Common myeloid progenitor, CD34-positive (primary cell): ENCODE measurements at regions of chr15 and their contacts with region 1.

Region 1: GRCh38 chr15:74620636-74621545 is 5.3 kb downstream of the CLK3 start:
- DNase-seq: peak; percentile 80 to 88 (median 86)
- H3K4me3 ChIP-seq: no peak overlapping the region
- H3K27ac ChIP-seq: no peak overlapping the region
- H3K4me1 ChIP-seq: peaks cover 8 to 24% (median 20%) of the 10 kb centered on the region in 4 experiments
- H3K27me3 ChIP-seq: no peaks in the 10 kb centered on the region

Region 2: GRCh38 chr15:74291101-74292071 is 329.5 kb before region 1 on chr15:
- CTCF ChIA-PET with region 1: no interaction called
- POLR2A ChIA-PET with region 1: no interaction called
- DNase-seq: peak; percentile 76 to 90 (median 89)
- H3K4me3 ChIP-seq: peak overlapping the region in 1 of 7 experiments; percentile 1
- H3K27ac ChIP-seq: no peak overlapping the region
- H3K4me1 ChIP-seq: peaks cover 0 to 10% (median 8%) of the 10 kb centered on the region in 4 experiments
- H3K27me3 ChIP-seq: peaks cover 0 to 28% (median 1%) of the 10 kb centered on the region in 5 experiments

Region 3: GRCh38 chr15:74470631-74471395 is 150.1 kb before region 1 on chr15:
- CTCF ChIA-PET with region 1: no interaction called
- POLR2A ChIA-PET with region 1: no interaction called
- DNase-seq: no peak
- H3K4me3 ChIP-seq: no peak overlapping the region
- H3K27ac ChIP-seq: no peak overlapping the region
- H3K4me1 ChIP-seq: no peaks in the 10 kb centered on the region
- H3K27me3 ChIP-seq: no peaks in the 10 kb centered on the region

Region 4: GRCh38 chr15:74680456-74680855 is 59.6 kb after region 1 on chr15:
- CTCF ChIA-PET with region 1: no interaction called
- POLR2A ChIA-PET with region 1: no interaction called
- DNase-seq: no peak
- H3K4me3 ChIP-seq: no peak overlapping the region
- H3K27ac ChIP-seq: no peak overlapping the region
- H3K4me1 ChIP-seq: no peaks in the 10 kb centered on the region
- H3K27me3 ChIP-seq: no peaks in the 10 kb centered on the region

Region 5: DNA sequence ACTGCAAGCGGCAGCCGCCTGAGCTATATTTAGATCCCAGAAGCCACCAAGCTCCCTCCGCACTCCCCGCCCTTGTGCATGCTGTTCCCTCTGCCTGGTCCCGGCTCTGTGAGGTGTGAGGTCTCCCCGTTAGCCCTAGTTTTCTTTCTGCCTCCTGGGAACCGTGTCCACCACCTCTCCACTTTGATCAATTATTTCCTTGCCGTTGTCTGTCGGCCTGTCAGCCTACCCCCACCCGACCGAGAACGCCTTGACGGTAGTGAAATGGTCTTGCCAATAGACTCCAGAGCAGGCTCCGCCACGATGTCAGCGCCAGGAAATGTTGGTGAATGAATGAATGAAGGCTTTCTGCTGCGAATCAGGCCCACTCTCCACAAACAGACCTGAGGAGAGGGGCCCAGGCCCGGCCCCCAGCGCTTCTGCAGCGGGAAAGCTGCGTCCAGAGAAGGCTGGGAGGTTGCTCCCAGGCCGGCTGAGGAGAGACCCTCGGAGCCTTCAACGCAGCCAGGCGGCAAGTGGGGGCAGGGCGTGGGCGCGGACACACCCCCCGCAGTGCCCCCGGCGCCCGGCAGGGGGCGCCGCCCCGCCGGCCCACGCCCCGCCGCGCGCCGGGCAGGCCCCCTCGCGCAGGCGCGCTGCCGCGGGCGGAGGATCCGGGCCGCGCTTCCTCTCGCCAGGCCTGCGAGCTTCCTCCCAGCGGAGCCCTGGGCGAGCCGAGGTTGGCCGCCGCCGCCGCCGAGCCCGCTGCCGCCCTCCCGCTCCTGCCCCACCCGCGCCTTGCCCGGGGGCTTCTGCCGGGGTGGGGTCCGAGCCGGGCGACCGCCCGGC is 160.8 kb after region 1 on chr15 and contains the start of gene CSK:
- CTCF ChIA-PET with region 1: interaction called, 735 read pairs
- POLR2A ChIA-PET with region 1: no interaction called
- DNase-seq: peak; percentile 72 to 84 (median 81)
- H3K4me3 ChIP-seq: peak within 1 kb of the TSS; percentile 59 to 97 (median 86)
- H3K27ac ChIP-seq: peak within 1 kb of the TSS; percentile 75 to 89
- H3K4me1 ChIP-seq: peaks cover 34 to 91% (median 91%) of the 10 kb centered on the region in 4 experiments
- H3K27me3 ChIP-seq: no peaks in the 10 kb centered on the region